ENCODE measurements at regions of chr11 and their contacts with region 1.

Region 1: GRCh38 chr11:122189229-122189628 is 73.2 kb upstream of the BLID start:
- DNase-seq: no peak
- ATAC-seq: no peak
- H3K4me3 Mint-ChIP-seq: no peak overlapping the region
- H3K27ac Mint-ChIP-seq: no peak overlapping the region
- H3K4me1 Mint-ChIP-seq: peaks cover 3% of the 10 kb centered on the region
- H3K27me3 Mint-ChIP-seq: peaks cover 37% of the 10 kb centered on the region

Region 2: DNA sequence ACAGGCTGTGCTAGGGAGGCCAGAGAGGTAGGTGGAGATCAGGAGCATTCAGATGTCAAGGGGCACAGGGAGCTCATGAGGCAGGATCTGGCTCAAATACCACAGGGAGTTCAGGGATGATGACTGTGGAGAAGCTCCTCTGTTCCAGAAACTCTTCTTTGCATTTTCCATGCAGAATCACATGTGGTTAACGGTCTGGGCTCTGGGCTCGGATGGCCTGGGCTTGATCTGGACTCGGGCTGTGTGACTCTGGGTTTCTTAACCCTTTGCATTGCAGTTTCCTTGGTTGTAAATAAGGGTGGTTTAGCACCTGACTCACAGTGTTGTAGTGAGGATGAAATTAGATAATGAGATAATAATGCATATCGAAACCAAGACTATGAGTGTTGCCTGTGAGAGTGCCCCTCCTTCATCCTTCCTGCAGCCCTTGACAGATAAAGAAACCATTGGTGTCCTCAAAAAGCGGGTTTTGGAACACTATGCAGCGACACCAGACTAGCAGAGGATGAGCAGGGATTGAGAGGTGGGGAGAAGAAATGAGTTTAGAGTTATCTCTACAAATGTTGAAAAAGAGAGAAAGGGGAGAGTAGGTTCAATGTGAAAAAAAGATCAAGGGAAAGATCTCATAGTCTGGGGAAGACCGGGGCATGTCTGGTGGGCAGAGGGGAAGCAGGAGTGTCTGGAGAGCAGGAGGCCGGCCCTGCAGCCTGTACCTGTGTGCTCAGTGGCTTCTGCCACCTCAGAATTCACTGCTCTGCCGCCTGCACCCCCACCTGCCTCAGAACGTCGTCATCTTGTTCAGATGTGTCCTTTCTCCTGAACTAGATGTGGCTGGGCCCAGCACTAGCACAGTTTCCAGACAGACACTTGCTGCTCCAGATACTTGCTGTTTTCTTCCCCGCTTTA is 538.6 kb before region 1 on chr11:
- CTCF ChIA-PET with region 1: no interaction called
- POLR2A ChIA-PET with region 1: no interaction called
- intact Hi-C with region 1: loop called in 1 of 2 experiments (anchors 2 kb)
- DNase-seq: peak; percentile 46
- ATAC-seq: peak; percentile 90
- H3K4me3 Mint-ChIP-seq: no peak overlapping the region
- H3K27ac Mint-ChIP-seq: peak overlapping the region; percentile 75
- H3K4me1 Mint-ChIP-seq: peaks cover 25% of the 10 kb centered on the region
- H3K27me3 Mint-ChIP-seq: peaks cover 2% of the 10 kb centered on the region

Region 3: GRCh38 chr11:122159173-122159721 is 30.0 kb before region 1 on chr11:
- CTCF ChIA-PET with region 1: no interaction called
- POLR2A ChIA-PET with region 1: no interaction called
- intact Hi-C with region 1: no loop called
- DNase-seq: no peak
- ATAC-seq: no peak
- H3K4me3 Mint-ChIP-seq: no peak overlapping the region
- H3K27ac Mint-ChIP-seq: no peak overlapping the region
- H3K4me1 Mint-ChIP-seq: peaks cover 5% of the 10 kb centered on the region
- H3K27me3 Mint-ChIP-seq: peaks cover 10% of the 10 kb centered on the region

Region 4: GRCh38 chr11:122170815-122171475 is 18.3 kb before region 1 on chr11:
- CTCF ChIA-PET with region 1: no interaction called
- POLR2A ChIA-PET with region 1: no interaction called
- intact Hi-C with region 1: no loop called
- DNase-seq: peak; percentile 6
- ATAC-seq: peak; percentile 49
- H3K4me3 Mint-ChIP-seq: no peak overlapping the region
- H3K27ac Mint-ChIP-seq: no peak overlapping the region
- H3K4me1 Mint-ChIP-seq: no peaks in the 10 kb centered on the region
- H3K27me3 Mint-ChIP-seq: peaks cover 6% of the 10 kb centered on the region

Region 5: GRCh38 chr11:122202951-122203456 is 13.8 kb after region 1 on chr11:
- CTCF ChIA-PET with region 1: interaction called, 14 read pairs
- POLR2A ChIA-PET with region 1: no interaction called
- intact Hi-C with region 1: no loop called
- DNase-seq: peak; percentile 69
- ATAC-seq: peak; percentile 74
- H3K4me3 Mint-ChIP-seq: no peak overlapping the region
- H3K27ac Mint-ChIP-seq: no peak overlapping the region
- H3K4me1 Mint-ChIP-seq: no peaks in the 10 kb centered on the region
- H3K27me3 Mint-ChIP-seq: peaks cover 34% of the 10 kb centered on the region